ENCODE measurements at regions of chr3 and their contacts with region 1.

Region 1: DNA sequence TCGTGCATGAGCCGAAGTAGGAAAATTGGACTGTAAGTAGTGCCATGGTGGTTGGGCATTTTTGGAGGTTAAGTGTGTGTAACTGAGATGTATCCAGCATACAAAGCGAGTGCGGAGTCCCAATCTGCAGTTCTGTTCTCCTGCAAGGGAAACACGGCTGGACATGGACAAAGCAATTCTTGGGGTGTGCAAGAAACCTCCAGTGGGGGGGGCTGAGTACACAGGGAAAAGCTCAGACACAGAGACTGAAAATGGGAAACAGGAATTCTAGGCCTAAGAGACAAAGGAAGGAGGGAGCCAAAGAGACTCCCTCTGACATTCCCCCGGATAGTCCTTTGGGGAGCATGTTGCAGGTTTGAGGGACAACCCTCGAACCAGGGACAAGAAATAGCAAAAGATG is 83.2 kb upstream of the PLSCR4 start:
- DNase-seq: peak; percentile 56
- H3K4me3 ChIP-seq: no peak overlapping the region
- H3K27ac ChIP-seq: no peak overlapping the region
- H3K4me1 ChIP-seq: no peaks in the 10 kb centered on the region
- H3K27me3 ChIP-seq: no peaks in the 10 kb centered on the region

Region 2: DNA sequence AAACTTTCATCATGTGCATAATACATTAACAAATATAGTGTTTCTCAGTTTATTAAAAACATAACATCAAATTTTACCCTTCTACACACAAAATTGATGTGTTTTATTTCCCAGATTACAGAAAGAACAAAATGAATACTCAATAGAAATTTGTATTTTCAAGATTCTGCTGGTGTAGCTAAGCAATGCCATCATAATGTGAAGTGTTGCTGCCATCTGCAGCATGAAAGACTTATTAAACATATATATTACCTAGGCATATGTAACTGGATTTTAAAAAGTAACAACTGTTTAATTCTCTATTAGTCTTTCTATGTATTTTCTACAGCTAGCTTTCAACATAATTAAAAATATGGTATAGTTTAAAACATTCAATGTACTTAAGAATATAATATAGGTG is 243.5 kb after region 1 on chr3:
- in situ Hi-C with region 1: loop called (anchors 10 kb)
- DNase-seq: peak; percentile 70
- H3K4me3 ChIP-seq: no peak overlapping the region
- H3K27ac ChIP-seq: no peak overlapping the region
- H3K4me1 ChIP-seq: no peaks in the 10 kb centered on the region
- H3K27me3 ChIP-seq: no peaks in the 10 kb centered on the region